MCF 10A (cell line): ENCODE measurements at regions of chr1 and their contacts with region 1.

Region 1: GRCh38 chr1:201703621-201704439 is 125.1 kb upstream of the IPO9 start:
- DNase-seq: peak; percentile 90
- H3K4me3 Mint-ChIP-seq: no peak overlapping the region
- H3K27ac Mint-ChIP-seq: peak overlapping the region; percentile 16
- H3K4me1 Mint-ChIP-seq: peaks cover 25% of the 10 kb centered on the region
- H3K27me3 Mint-ChIP-seq: no peaks in the 10 kb centered on the region
- CTCF ChIP-seq: peak; percentile 100

Region 2: DNA sequence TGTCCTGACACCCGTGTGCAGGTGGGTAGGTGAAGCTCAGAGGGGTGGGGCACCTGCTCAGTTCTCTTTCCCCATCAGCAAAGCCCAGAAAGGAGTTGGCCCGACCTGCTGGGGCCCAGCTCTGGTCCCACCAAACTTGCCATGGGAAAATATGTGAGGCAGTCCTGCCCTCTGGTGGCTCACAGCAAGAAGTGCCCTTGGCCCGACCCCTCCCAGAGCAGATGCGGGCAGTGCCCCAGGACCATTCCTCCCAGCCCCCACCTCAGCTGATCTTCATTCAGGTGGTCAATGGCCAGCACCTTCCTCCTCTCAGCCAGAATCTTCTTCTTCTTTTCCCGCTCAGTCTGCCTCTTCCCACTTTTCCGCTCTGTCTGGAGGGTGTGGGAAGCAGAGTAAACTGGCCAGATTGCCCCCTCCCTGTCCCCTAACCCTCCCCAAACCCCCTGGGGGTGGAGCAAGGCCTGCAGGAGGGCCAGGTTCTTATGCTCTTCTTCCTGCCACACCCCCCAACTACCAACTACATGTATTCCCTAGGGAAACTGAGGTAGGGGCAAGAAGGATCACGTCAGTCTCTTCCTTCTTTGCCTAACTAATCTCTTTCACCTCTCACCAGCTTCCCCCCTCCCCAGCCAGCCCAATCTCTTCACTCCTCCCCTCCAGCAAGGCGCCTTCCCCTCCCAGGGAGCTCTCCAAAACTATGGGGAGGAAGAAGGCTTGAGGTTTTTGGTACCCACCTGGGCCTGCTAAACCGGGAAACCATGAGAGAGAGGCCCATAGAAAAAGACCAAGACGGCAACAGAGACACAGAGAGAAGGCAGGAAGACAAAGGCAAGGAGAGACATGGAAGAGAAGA is 342.0 kb before region 1 on chr1:
- CTCF ChIA-PET with region 1: no interaction called
- POLR2A ChIA-PET with region 1: no interaction called
- intact Hi-C with region 1: no loop called
- DNase-seq: peak; percentile 82
- H3K4me3 Mint-ChIP-seq: no peak overlapping the region
- H3K27ac Mint-ChIP-seq: no peak overlapping the region
- H3K4me1 Mint-ChIP-seq: peaks cover 24% of the 10 kb centered on the region
- H3K27me3 Mint-ChIP-seq: peaks cover 8% of the 10 kb centered on the region
- CTCF ChIP-seq: peak; percentile 100

Region 3: DNA sequence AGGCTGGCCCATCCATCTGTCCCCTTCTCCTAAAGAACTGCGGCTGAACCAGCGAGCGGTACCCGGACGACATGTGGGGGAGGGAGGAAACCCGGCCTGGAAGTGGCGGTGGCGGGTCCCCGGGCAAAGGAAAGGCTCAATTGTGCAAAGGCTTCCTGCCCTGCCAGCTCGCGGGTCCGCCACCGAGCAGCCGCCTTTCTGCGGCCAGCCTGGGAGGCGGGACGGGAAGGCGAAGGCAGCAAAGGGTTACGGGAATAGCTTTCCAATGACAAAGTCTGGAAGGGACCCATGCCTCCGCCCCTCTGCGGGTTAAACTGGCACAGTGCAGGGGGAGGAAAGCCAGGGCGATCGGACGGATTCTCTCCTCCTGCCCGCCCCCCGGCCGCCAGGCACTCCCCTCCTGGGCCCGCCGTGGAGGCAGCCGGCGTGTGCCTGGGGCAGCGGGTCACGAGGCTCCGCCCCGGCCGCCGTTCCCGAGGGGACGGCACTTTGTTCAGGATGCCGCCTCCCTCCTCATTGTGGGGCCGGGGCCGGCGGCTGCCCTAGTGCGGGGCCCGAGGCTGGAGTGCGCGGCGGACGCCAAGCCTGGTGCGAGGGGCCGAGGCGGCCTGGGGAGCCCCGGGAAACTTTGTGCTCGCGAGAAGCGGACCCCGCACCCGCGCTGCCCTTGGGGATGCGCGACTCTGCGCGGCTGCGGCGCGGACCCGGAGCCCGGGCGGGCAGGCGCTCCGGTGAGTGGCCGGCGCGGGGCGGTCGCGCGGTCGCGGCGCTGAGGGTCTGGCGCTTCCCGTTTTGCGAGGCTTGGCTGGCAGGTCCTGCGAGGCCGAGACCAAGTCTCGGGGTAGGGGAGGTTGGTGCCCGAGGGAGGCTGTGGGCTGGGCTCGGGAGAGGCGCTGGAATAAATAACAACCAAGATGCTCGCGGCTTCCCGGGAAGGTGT is 164.9 kb before region 1 on chr1 and contains the start of gene NAV1:
- CTCF ChIA-PET with region 1: interaction called, 241 read pairs
- POLR2A ChIA-PET with region 1: no interaction called
- intact Hi-C with region 1: no loop called
- DNase-seq: peak; percentile 56
- H3K4me3 Mint-ChIP-seq: peak within 1 kb of the TSS; percentile 70
- H3K27ac Mint-ChIP-seq: no peak within 1 kb of the TSS
- H3K4me1 Mint-ChIP-seq: peaks cover 35% of the 10 kb centered on the region
- H3K27me3 Mint-ChIP-seq: no peaks in the 10 kb centered on the region
- CTCF ChIP-seq: no peak
- total RNA-seq, gene NAV1: 31.4 and 34.9 TPM in 2 replicates

Region 4: DNA sequence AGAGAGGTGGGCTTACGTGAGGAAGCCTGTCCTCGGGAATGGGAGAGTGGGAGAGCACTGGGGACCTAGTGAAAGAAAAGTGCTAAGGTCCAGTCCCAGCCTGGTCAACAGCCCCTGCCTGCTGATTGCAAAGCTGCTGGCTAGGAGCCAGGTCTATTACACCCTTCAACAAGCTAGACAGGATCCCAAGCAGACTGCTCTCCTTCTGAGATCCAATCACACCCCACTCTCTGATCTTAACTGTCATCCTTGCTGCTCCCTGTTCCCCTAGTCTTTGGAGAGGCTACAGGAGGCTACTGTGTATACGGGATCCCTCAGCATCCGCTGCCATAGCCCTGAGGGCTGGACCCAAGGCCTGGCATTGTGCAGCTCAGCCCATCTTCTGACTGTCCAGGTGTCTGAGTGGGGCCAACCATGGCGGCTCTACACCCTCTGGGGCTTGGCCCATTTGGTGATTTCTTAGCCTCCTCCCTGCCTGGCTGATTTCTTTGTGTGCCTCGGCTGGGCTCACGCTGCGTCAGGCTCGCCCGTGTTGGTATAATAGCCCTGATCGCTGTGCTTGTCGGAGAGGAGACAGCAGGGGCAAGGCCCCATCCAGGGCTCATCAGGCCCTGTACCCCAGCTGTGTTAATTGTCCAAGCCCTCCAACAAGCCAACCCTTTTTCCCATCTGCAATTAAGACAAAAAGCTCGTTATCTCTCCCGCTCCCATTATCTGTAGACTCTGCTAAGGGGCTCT is 121.0 kb before region 1 on chr1:
- CTCF ChIA-PET with region 1: interaction called, 39 read pairs
- POLR2A ChIA-PET with region 1: no interaction called
- intact Hi-C with region 1: no loop called
- DNase-seq: peak; percentile 60
- H3K4me3 Mint-ChIP-seq: no peak overlapping the region
- H3K27ac Mint-ChIP-seq: no peak overlapping the region
- H3K4me1 Mint-ChIP-seq: peaks cover 28% of the 10 kb centered on the region
- H3K27me3 Mint-ChIP-seq: peaks cover 12% of the 10 kb centered on the region
- CTCF ChIP-seq: no peak

Region 5: DNA sequence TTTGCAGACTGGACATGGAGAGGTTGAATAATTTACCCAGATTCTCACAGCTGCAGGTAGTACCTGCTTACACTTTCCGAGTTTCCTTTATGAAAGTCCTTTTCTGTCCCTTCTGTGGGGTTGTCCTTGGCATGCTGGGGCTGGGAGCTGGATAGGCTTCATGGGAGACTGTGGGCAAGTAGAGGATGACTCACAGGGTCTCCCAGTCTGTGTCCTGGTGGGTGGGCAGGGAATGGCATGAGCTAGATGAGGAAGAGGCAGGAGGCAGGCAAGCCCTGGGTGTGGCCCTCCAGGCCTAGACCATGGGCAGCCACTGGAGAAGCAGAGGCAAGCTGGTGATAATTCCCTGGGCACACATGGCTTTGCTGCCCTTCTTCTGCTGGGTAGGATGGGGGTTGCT is 84.3 kb before region 1 on chr1:
- CTCF ChIA-PET with region 1: interaction called, 11 read pairs
- POLR2A ChIA-PET with region 1: no interaction called
- intact Hi-C with region 1: no loop called
- DNase-seq: no peak
- H3K4me3 Mint-ChIP-seq: no peak overlapping the region
- H3K27ac Mint-ChIP-seq: no peak overlapping the region
- H3K4me1 Mint-ChIP-seq: peaks cover 23% of the 10 kb centered on the region
- H3K27me3 Mint-ChIP-seq: no peaks in the 10 kb centered on the region
- CTCF ChIP-seq: no peak

Region 6: DNA sequence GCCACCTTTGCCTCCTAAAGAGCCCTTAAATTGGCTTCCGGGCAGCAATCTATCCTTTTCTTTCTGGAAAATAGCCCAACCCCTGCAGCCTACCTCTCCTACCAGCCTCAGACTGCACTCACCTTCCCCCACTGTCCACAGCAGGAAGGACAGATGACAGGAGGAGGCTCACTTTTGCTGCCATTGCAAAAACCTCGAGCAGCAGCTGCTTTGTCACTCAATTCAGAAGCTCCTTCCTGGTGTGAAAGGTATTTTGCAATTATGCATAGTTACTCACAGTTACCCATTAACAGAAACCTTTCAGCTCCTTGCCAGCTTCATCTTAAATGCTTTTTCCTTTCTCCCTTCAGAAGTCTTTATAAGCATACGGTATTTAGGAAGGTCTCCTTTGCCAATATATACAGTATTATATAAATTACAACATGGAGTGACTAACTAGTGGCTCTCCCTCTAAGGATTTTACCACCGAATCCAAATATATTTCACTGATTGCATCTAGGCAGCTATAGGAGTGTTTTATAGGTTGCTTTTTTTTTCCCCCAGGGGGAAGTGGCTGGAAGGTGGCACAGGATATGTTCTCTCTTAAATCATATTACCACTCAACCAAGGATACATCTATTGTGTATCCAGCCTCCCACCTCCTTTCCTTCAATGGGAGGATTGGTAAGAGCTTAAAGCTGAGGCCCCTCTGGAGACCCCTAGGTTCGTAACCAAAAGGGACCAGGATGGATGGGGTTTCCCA is 16.9 kb before region 1 on chr1:
- CTCF ChIA-PET with region 1: interaction called, 23 read pairs
- POLR2A ChIA-PET with region 1: no interaction called
- intact Hi-C with region 1: no loop called
- DNase-seq: peak; percentile 64
- H3K4me3 Mint-ChIP-seq: no peak overlapping the region
- H3K27ac Mint-ChIP-seq: peak overlapping the region; percentile 17
- H3K4me1 Mint-ChIP-seq: peaks cover 13% of the 10 kb centered on the region
- H3K27me3 Mint-ChIP-seq: no peaks in the 10 kb centered on the region
- CTCF ChIP-seq: no peak

Region 7: DNA sequence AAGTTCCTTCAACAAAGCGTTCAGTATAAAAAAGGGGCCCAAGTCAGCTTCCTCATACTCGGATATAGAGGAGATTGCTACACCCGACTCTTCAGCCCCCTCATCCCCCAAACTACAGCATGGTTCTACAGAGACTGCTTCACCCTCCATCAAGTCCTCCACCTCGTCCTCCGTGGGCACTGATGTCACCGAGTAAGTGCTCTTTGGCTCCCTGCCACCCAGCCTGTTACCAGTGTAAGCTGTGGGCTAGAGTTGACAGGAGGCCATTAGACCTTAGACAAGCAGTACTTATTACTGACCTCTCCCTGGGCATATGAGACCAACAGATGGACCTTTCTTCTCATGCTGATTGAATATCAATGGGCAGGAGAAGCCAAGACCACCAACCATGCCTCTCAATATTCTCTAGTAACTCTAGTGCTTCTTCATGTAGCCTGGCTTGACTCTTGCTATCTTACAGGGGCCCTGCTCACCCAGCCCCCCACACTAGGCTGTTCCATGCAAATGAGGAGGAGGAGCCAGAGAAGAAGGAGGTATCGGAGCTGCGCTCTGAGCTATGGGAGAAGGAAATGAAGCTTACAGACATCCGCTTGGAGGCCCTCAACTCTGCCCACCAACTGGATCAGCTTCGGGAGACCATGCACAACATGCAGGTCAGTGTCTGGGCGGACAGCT is 104.3 kb after region 1 on chr1:
- CTCF ChIA-PET with region 1: interaction called, 44 read pairs
- POLR2A ChIA-PET with region 1: no interaction called
- intact Hi-C with region 1: no loop called
- DNase-seq: no peak
- H3K4me3 Mint-ChIP-seq: no peak overlapping the region
- H3K27ac Mint-ChIP-seq: no peak overlapping the region
- H3K4me1 Mint-ChIP-seq: no peaks in the 10 kb centered on the region
- H3K27me3 Mint-ChIP-seq: no peaks in the 10 kb centered on the region
- CTCF ChIP-seq: no peak